OCI-LY7 (cell line): ENCODE measurements at regions of chr11 and their contacts with region 1.

Region 1: GRCh38 chr11:111387363-111387762 is 8.3 kb upstream of the POU2AF1 start:
- DNase-seq: no peak
- H3K4me3 ChIP-seq: no peak overlapping the region
- H3K27ac ChIP-seq: no peak overlapping the region
- H3K4me1 ChIP-seq: peaks cover 52% of the 10 kb centered on the region
- CTCF ChIP-seq: no peak

Region 2: GRCh38 chr11:111272420-111272819 is 114.9 kb before region 1 on chr11:
- CTCF ChIA-PET with region 1: no interaction called
- POLR2A ChIA-PET with region 1: no interaction called
- intact Hi-C with region 1: no loop called
- DNase-seq: peak; percentile 71
- H3K4me3 ChIP-seq: peak overlapping the region; percentile 41
- H3K27ac ChIP-seq: peak overlapping the region; percentile 90
- H3K4me1 ChIP-seq: peaks cover 66% of the 10 kb centered on the region
- CTCF ChIP-seq: no peak

Region 3: GRCh38 chr11:111399187-111400031 is 12.0 kb after region 1 on chr11:
- CTCF ChIA-PET with region 1: interaction called, 5 read pairs
- POLR2A ChIA-PET with region 1: interaction called, 83 read pairs
- intact Hi-C with region 1: no loop called
- DNase-seq: peak; percentile 72
- H3K4me3 ChIP-seq: peak overlapping the region; percentile 47
- H3K27ac ChIP-seq: peak overlapping the region; percentile 90
- H3K4me1 ChIP-seq: peaks cover 73% of the 10 kb centered on the region
- CTCF ChIP-seq: peak; percentile 79

Region 4: GRCh38 chr11:111408789-111409727 is 21.7 kb after region 1 on chr11:
- CTCF ChIA-PET with region 1: interaction called, 3 read pairs
- POLR2A ChIA-PET with region 1: interaction called, 74 read pairs
- intact Hi-C with region 1: no loop called
- DNase-seq: no peak
- H3K4me3 ChIP-seq: peak overlapping the region; percentile 10
- H3K27ac ChIP-seq: peak overlapping the region; percentile 83
- H3K4me1 ChIP-seq: peaks cover 82% of the 10 kb centered on the region
- CTCF ChIP-seq: no peak

Region 5: GRCh38 chr11:111414267-111414931 is 27.0 kb after region 1 on chr11:
- CTCF ChIA-PET with region 1: interaction called, 8 read pairs
- POLR2A ChIA-PET with region 1: interaction called, 74 read pairs
- intact Hi-C with region 1: no loop called
- DNase-seq: peak; percentile 86
- H3K4me3 ChIP-seq: peak overlapping the region; percentile 51
- H3K27ac ChIP-seq: peak overlapping the region; percentile 97
- H3K4me1 ChIP-seq: peaks cover 99% of the 10 kb centered on the region
- CTCF ChIP-seq: no peak; the same call in 1 of the 2 replicates